A673 (cell line): ENCODE measurements at regions of chr15 and their contacts with region 1.

Region 1: GRCh38 chr15:91271565-91272153 is 171.6 kb downstream of the SV2B start:
- DNase-seq: peak; percentile 81
- H3K4me3 ChIP-seq: no peak overlapping the region
- H3K27ac ChIP-seq: no peak overlapping the region
- H3K4me1 ChIP-seq: no peaks in the 10 kb centered on the region
- H3K27me3 ChIP-seq: no peaks in the 10 kb centered on the region
- CTCF ChIP-seq: peak; percentile 88

Region 2: DNA sequence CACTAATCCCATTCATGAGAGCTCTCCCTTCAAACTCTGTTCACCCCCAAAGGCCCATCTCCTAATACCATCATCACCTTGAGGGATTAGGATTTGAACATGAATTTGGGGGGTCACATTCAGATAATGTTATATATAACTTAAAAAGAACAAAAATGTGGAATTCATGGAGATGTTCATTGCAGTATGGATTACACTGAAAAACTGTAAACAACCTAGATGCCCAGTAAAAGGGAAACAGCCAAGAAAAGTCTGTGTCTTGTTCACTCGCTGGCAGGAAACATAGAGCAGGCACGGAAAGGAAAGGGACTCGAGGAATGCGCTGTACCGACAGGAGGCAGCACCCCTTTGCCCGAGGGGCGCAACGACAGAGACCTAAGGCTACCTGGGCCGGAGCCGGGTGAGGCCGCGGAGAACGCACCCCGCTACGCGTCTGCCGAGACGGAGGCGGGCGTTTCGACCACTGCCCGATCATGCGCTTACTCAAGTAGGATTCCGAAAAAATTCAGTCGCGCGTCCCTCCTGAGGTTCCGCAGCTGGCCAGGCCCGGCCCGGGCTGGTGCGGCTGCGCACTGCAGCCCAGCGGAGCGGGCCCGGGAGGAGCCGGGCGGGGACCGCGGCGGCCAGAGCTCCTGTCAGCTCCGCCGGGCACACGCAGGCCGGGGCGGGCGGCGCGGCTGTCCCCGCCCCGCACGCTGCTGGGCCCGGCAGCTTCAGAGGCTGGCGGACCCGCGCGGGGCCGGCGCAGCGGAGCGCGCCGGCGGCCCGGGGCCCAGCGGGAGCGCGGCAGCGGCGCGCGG is 369.4 kb before region 1 on chr15:
- CTCF ChIA-PET with region 1: interaction called, 11 read pairs
- POLR2A ChIA-PET with region 1: no interaction called
- intact Hi-C with region 1: loop called (anchors 10 kb)
- DNase-seq: peak; percentile 88
- H3K4me3 ChIP-seq: peak overlapping the region; percentile 69
- H3K27ac ChIP-seq: peak overlapping the region; percentile 84
- H3K4me1 ChIP-seq: peaks cover 10% of the 10 kb centered on the region
- H3K27me3 ChIP-seq: no peaks in the 10 kb centered on the region
- CTCF ChIP-seq: peak; percentile 80

Region 3: DNA sequence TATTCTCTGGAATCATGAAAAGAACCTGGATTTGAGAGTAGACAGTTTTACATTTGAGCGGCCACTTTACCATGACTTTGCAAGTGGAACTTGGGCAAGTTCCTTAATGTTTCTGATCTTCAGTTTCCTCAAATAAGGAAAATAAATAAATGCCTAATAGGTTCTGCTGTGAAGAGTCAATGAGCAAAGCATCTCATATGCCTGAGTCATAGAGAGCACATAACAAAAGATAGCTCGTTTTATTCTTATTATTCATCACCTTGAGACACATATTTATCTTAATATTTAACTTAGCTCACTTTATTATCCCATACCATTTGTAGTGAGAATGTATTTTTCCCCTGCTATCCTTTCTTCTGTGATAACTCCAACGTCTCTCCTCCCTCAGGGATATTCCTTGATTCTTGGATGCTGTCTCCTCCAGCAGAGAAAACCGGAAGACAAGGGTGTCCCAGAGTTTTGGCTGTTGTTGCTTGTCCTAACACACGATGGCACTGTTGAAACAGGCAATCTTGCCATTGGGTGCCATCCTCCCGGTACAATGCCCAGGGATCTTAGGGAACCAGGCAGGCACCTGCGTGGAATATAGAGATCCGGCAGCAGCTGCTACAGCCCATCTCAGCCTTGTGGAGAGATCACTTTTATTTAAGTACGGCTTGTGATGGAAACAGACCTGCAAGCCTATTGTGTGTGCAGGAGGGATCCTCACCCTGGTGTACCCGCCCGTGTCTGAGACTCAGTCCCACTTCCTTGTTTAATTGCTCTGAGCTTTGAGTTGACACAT is 215.9 kb before region 1 on chr15:
- CTCF ChIA-PET with region 1: interaction called, 31 read pairs
- POLR2A ChIA-PET with region 1: no interaction called
- intact Hi-C with region 1: loop called (anchors 1 kb)
- DNase-seq: peak; percentile 89
- H3K4me3 ChIP-seq: no peak overlapping the region
- H3K27ac ChIP-seq: no peak overlapping the region
- H3K4me1 ChIP-seq: peaks cover 11% of the 10 kb centered on the region
- H3K27me3 ChIP-seq: no peaks in the 10 kb centered on the region
- CTCF ChIP-seq: peak; percentile 85

Region 4: DNA sequence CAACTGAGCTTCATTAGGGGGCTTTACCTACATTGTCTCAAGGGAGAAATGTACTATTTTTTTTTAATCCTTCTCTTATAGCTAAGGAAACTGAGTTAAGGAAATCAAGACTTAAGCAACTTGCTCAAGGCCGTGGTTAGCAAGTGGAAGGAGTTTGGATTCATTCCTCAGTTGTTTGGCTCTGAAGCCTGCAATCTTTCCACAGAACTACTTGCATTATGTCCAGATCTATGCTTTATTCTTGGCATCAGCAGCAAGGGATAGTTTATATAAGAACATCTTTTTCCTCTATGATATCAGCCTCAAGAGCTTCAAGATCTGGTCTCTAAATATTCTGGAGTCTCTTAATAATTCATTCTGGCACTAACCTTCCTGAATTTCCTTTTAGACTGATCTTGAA is 10.8 kb after region 1 on chr15:
- CTCF ChIA-PET with region 1: no interaction called
- POLR2A ChIA-PET with region 1: no interaction called
- intact Hi-C with region 1: no loop called
- DNase-seq: no peak
- H3K4me3 ChIP-seq: no peak overlapping the region
- H3K27ac ChIP-seq: no peak overlapping the region
- H3K4me1 ChIP-seq: no peaks in the 10 kb centered on the region
- H3K27me3 ChIP-seq: no peaks in the 10 kb centered on the region
- CTCF ChIP-seq: no peak